PC-3 (cell line): ENCODE measurements at regions of chr4 and their contacts with region 1.

Region 1: DNA sequence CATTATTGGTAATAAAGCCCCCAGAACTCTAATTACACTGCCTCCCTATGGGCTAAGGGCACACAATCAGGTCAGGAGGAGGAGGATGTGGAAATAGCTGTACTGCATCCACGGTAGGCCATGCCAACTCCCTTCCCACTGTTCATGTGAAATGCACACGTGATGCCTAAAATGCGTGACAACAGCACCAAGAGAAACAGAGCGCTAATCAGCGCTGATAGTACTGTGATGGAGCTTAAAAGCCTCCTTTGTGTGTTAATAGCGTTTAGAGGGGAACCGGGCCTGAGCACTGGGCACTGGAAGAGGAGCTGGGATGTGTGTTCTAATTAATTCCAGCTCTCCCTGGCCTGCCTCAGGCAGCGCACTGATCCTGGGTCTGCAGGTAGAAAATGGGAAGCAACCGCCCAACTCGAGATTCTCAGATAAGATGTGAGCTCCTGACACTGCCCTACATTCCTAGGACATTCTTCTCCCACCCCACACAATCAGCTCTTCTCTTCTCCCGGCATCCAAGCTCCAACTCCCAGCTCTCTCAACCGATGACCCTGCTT is 12.9 kb downstream of the DCTD start:
- DNase-seq: no peak
- ATAC-seq: no peak
- H3K4me3 ChIP-seq: no peak overlapping the region
- H3K27ac ChIP-seq: no peak overlapping the region
- H3K4me1 ChIP-seq: no peaks in the 10 kb centered on the region
- H3K27me3 ChIP-seq: no peaks in the 10 kb centered on the region
- CTCF ChIP-seq: no peak

Region 2: DNA sequence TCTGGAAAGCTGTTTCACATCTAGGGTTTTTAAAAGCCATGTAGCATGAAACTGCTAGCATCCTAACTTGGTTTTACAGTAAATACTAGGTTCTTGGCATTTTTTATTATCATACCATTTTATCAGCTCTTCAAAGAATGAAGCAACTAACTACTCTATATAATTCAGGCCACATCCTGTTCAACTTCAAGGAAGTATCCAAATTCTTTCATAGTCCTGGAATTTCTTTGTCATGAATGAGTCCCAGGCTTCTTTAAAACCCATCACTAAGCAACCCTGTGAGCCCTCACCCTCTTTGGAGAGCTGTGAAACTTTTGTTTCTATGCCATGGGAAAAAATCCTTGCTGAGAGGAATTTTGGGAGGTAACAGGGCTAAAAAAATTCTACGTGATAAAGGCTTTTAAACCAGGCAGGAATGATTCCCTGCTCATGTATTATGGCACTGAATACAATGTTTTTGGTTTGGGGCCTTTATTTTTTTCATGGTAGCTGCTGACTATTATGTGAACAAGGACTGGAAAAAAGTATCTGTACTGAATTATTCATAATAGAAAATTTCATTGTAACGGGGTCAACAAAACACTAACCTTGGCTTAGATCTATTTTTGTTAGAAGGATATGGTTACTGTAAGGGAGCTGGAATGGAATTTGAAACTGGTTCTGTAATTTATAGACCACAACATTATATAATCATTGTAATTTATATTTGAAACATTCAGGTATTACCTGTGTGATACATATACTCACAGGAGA is 152.0 kb before region 1 on chr4:
- CTCF ChIA-PET with region 1: no interaction called
- POLR2A ChIA-PET with region 1: interaction called, 10 read pairs
- intact Hi-C with region 1: no loop called
- DNase-seq: peak; percentile 78
- ATAC-seq: peak; percentile 68
- H3K4me3 ChIP-seq: no peak overlapping the region
- H3K27ac ChIP-seq: peak overlapping the region; percentile 77
- H3K4me1 ChIP-seq: peaks cover 63% of the 10 kb centered on the region
- H3K27me3 ChIP-seq: no peaks in the 10 kb centered on the region
- CTCF ChIP-seq: no peak